HepG2 (cell line): ENCODE measurements at regions of chr6 and their contacts with region 1.

Region 1: DNA sequence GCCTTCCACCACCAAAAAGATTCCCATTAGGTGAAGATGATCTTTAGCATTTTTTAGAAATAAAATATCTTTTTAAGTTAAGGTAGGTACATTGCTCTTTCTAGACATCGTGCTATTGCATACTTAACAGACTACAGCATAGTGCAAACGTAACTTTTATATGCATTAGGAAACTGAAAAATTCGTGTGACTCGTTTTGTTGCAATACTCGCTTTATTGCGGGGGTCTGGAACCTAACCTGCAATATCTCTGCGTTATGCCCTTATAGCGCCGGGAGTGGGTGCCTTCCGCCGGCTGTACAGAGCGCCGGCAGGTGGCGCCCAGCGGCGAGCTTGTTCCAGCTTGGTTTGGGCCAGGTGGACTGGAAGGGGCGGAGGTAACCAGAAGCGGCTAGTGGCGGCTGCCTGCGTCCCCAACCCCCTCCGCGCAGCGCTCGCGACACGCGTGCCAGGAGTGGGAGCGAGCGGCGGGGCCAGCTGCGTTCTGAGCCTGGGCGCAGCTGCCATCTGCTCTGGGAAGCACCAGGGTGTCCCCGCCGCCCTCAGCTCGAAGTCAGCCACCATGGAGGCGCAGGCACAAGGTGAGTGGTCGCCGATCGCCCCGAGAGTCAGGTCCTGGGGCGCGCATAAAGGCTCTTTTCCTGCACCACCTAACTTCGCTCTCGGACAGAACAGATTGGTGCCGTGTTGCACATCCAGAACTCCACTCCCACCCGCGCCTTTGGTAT is at the start of gene TPD52L1:
- DNase-seq: peak; percentile 66
- ATAC-seq: peak; percentile 100
- H3K4me3 ChIP-seq: peak within 1 kb of the TSS; percentile 40 to 69 (median 55); a peak in 5 of 6 replicates
- H3K27ac ChIP-seq: no peak within 1 kb of the TSS
- H3K4me1 ChIP-seq: peaks cover 11% of the 10 kb centered on the region
- H3K27me3 ChIP-seq: peaks cover 3 to 21% of the 10 kb centered on the region in 2 experiments; a peak in 3 of 5 replicates
- CTCF ChIP-seq: peak; percentile 97
- EP300 ChIP-seq: no peak
- POLR2A ChIP-seq: no peak
- RAD21 ChIP-seq: peak; percentile 75
- total RNA-seq, gene TPD52L1: 0.49 and 0.67 TPM in 2 replicates

Region 2: DNA sequence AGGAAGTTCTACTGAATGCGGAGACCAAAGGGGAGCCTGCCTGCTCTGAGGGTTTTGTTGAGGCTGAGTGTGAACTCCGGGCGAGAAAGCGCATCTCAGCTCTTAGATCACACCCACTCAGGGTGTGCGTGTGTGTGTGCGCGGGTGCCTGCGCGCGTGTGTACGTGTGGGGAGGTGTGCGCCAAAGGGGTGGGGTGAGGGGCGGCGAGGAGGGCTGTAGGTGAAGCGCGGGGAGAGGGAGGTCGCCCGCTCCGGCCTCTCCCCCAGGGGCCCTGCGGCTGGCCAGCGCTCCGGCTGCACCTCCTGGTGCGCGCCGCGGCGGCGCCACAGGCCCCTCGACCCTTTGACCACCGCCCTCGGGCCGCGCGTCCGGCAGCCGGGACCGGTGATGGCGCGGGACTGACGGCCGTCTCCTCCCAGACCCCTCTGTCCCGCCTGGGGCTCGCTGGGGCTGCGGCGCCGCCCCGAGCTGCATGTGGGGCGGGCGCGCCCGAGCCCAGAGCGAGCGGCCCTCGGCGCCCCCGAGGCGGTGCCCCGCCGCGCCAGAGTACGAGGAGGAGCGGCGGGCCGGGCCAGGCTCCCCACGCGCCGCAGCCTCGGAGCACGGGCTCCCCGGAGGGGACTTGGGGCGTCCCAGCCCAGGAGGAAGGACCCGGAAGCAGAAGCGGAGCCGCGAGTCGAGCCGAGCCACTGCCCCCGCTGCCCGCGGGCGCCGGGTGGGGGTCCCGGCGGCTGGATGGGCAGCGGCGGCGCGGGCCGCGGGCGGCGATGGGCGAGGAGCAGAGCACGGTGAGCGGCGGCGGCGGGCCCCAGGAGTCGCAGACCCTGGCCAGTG is 191.6 kb before region 1 on chr6 and contains the start of gene RNF217:
- CTCF ChIA-PET with region 1: no interaction called
- POLR2A ChIA-PET with region 1: no interaction called
- in situ Hi-C with region 1: no loop called
- intact Hi-C with region 1: loop called (anchors 5 kb)
- DNase-seq: no peak
- ATAC-seq: peak; percentile 79
- H3K4me3 ChIP-seq: peak within 1 kb of the TSS; percentile 42 to 70 (median 63)
- H3K27ac ChIP-seq: no peak within 1 kb of the TSS
- H3K4me1 ChIP-seq: peaks cover 16% of the 10 kb centered on the region
- H3K27me3 ChIP-seq: peaks cover 0 to 12% of the 10 kb centered on the region in 2 experiments; a peak in 2 of 5 replicates
- CTCF ChIP-seq: no peak
- EP300 ChIP-seq: no peak
- POLR2A ChIP-seq: no peak
- RAD21 ChIP-seq: no peak
- total RNA-seq, gene RNF217: 1.2 and 2.2 TPM in 2 replicates

Region 3: GRCh38 chr6:125182237-125183008 is 28.9 kb after region 1 on chr6:
- CTCF ChIA-PET with region 1: no interaction called
- POLR2A ChIA-PET with region 1: no interaction called
- in situ Hi-C with region 1: no loop called
- intact Hi-C with region 1: no loop called
- DNase-seq: no peak
- ATAC-seq: peak; percentile 39; the same call in 2 of the 3 replicates
- H3K4me3 ChIP-seq: no peak overlapping the region
- H3K27ac ChIP-seq: no peak overlapping the region
- H3K4me1 ChIP-seq: no peaks in the 10 kb centered on the region
- H3K27me3 ChIP-seq: no peaks in the 10 kb centered on the region
- CTCF ChIP-seq: no peak
- EP300 ChIP-seq: no peak
- POLR2A ChIP-seq: no peak
- RAD21 ChIP-seq: no peak

Region 4: GRCh38 chr6:125301435-125302391 is 148.2 kb after region 1 on chr6 and contains the start of gene HDDC2:
- CTCF ChIA-PET with region 1: no interaction called
- POLR2A ChIA-PET with region 1: no interaction called
- in situ Hi-C with region 1: no loop called
- intact Hi-C with region 1: loop called (anchors 1 kb)
- DNase-seq: peak; percentile 68
- ATAC-seq: peak; percentile 99
- H3K4me3 ChIP-seq: peak within 1 kb of the TSS; percentile 54 to 85 (median 84)
- H3K27ac ChIP-seq: peak within 1 kb of the TSS; percentile 67
- H3K4me1 ChIP-seq: peaks cover 32% of the 10 kb centered on the region
- H3K27me3 ChIP-seq: peaks cover 0 to 4% of the 10 kb centered on the region in 2 experiments; a peak in 1 of 5 replicates
- CTCF ChIP-seq: peak; percentile 7; the same call in 1 of the 2 replicates
- EP300 ChIP-seq: peak in 1 of 2 experiments; percentile 38; a peak in 2 of 4 replicates
- POLR2A ChIP-seq: peak; percentile 82 to 83
- RAD21 ChIP-seq: peak; percentile 71
- total RNA-seq, gene HDDC2: 78.7 and 90.7 TPM in 2 replicates

Region 5: DNA sequence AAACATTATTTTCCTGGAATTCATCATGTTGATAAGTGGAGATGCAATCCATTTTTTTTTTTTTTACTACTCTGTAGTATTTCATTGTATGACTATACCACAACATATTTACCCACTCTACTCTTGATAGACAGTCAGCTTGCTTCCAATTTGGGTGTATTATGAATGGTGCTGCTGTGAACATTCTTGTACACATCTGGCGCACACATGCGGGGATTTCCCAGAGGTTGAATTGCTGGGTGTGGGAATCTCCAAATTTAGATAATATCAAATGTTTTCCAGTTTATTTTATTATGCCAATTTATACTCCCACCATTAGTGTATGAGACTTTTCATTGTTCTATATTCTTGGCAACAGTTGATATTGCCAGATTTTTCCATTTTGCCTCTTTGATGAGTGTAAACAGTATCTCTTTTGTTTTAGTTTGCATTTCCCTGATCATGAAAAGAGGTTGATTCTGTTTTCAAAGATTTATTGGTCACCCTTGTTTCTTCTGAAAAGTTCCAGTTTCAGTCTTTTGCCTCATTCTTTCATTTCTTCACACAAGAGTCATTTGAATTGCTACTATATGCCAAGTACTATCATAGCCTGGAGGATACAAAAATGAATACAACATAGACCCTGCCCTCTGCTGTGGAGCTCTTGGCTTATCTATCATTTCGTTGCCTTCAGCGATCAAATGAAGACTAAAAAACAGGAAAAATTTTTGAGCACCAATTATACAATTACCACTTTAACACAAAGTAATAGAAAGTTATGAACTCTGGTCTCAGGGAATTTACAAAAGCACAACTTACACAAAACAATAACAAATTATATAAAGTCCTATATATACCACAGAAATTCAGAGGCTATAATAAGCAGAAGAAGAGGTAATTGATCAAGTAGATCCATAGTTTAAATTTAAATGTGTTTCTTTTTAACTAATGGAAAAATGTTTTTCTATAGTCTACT is 620.1 kb after region 1 on chr6:
- CTCF ChIA-PET with region 1: interaction called, 5 read pairs
- POLR2A ChIA-PET with region 1: no interaction called
- in situ Hi-C with region 1: no loop called
- intact Hi-C with region 1: loop called (anchors 1 kb)
- DNase-seq: no peak
- ATAC-seq: no peak
- H3K4me3 ChIP-seq: no peak overlapping the region
- H3K27ac ChIP-seq: no peak overlapping the region
- H3K4me1 ChIP-seq: peaks cover 15% of the 10 kb centered on the region
- H3K27me3 ChIP-seq: 0 out of 5 replicates have a peak, but pooled peaks cover 0 to 1% of the 10 kb centered on the region in 2 experiments
- CTCF ChIP-seq: no peak
- EP300 ChIP-seq: no peak
- POLR2A ChIP-seq: no peak
- RAD21 ChIP-seq: no peak

Region 6: DNA sequence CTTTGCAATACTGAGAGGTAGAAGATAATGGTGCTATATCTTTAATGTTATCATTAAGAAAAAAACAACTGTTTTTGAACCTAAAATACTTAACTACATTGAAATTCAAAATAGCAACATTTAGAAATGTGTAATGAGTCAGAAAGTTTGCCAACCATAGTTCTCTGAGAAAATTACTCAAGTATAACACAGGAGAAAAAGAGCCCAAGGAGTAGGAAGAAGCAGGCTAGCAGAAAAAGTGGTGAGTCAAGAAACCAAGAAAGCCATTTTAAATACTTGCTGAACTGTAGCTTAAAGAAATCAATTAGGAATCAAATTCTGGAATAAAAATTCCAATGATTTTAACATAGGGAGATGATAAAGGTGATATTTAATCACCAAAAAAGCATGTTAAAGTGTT is 1783.9 kb after region 1 on chr6:
- CTCF ChIA-PET with region 1: no interaction called
- POLR2A ChIA-PET with region 1: no interaction called
- in situ Hi-C with region 1: no loop called
- intact Hi-C with region 1: no loop called
- DNase-seq: no peak
- ATAC-seq: no peak
- H3K4me3 ChIP-seq: no peak overlapping the region
- H3K27ac ChIP-seq: no peak overlapping the region
- H3K4me1 ChIP-seq: no peaks in the 10 kb centered on the region
- H3K27me3 ChIP-seq: no peaks in the 10 kb centered on the region; a peak in 1 of 5 replicates
- CTCF ChIP-seq: no peak
- EP300 ChIP-seq: no peak
- POLR2A ChIP-seq: no peak
- RAD21 ChIP-seq: no peak